Activated CD4-positive, alpha-beta memory T cell treated with anti-CD3 and anti-CD28 coated beads for 36 hours (primary cell): ENCODE measurements at regions of chr1 and their contacts with region 1.

Region 1: GRCh38 chr1:3796215-3797061 is at the start of gene LRRC47:
- DNase-seq: peak; percentile 96
- H3K4me3 Mint-ChIP-seq: peak within 1 kb of the TSS; percentile 94
- H3K27ac Mint-ChIP-seq: peak within 1 kb of the TSS; percentile 87
- H3K4me1 Mint-ChIP-seq: peaks cover 47% of the 10 kb centered on the region
- H3K27me3 Mint-ChIP-seq: peaks cover 7% of the 10 kb centered on the region
- total RNA-seq, gene LRRC47: 26.1 to 29.2 TPM

Region 2: GRCh38 chr1:2611621-2612344 is 1184.7 kb before region 1 on chr1:
- CTCF ChIA-PET with region 1: no interaction called
- POLR2A ChIA-PET with region 1: no interaction called
- intact Hi-C with region 1: no loop called
- DNase-seq: no peak
- H3K4me3 Mint-ChIP-seq: no peak overlapping the region
- H3K27ac Mint-ChIP-seq: no peak overlapping the region
- H3K4me1 Mint-ChIP-seq: peaks cover 2% of the 10 kb centered on the region
- H3K27me3 Mint-ChIP-seq: peaks cover 2% of the 10 kb centered on the region

Region 3: DNA sequence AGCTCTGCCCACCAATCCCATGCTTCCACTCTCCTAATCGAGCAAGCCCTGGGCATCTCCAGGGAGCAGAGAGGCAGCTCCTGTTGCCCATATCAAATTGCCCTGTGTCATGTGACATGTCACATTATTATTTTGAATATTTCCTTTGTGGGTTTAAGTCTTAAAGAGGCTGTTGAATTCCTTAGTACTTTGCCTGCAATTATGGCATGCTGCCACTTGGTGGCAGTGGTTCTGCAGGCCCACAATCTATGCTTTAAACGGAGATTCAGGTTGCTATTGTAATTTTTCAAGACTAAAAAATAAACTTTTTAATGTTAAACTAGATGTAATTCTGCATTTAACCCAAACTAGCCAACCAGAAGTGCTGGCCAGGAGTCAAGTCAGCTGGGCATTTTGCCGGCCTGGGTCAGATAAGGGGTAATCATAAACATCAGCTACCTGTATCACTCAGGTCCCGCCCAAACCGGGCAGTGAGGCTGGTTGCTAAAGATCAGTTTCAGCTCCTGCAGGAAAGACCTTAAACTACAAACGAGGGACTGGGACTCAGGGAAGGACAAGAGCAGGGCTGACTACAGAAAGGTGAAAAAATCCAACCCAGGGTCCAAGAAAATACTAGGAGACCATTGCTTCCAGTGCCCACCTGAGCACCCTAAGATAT is 379.2 kb before region 1 on chr1:
- CTCF ChIA-PET with region 1: no interaction called
- POLR2A ChIA-PET with region 1: no interaction called
- intact Hi-C with region 1: no loop called
- DNase-seq: no peak
- H3K4me3 Mint-ChIP-seq: no peak overlapping the region
- H3K27ac Mint-ChIP-seq: no peak overlapping the region
- H3K4me1 Mint-ChIP-seq: no peaks in the 10 kb centered on the region
- H3K27me3 Mint-ChIP-seq: peaks cover 3% of the 10 kb centered on the region

Region 4: GRCh38 chr1:3649342-3650247 is 146.8 kb before region 1 on chr1 and contains the start of gene WRAP73:
- CTCF ChIA-PET with region 1: no interaction called
- POLR2A ChIA-PET with region 1: no interaction called
- intact Hi-C with region 1: loop called (anchors 5 kb)
- DNase-seq: peak; percentile 95
- H3K4me3 Mint-ChIP-seq: peak within 1 kb of the TSS; percentile 76
- H3K27ac Mint-ChIP-seq: no peak within 1 kb of the TSS
- H3K4me1 Mint-ChIP-seq: peaks cover 23% of the 10 kb centered on the region
- H3K27me3 Mint-ChIP-seq: peaks cover 25% of the 10 kb centered on the region
- total RNA-seq, gene WRAP73: 34.5 to 34.6 TPM

Region 5: GRCh38 chr1:3695326-3696217 is 100.9 kb before region 1 on chr1:
- CTCF ChIA-PET with region 1: no interaction called
- POLR2A ChIA-PET with region 1: no interaction called
- intact Hi-C with region 1: no loop called
- DNase-seq: peak; percentile 49
- H3K4me3 Mint-ChIP-seq: peak overlapping the region; percentile 23
- H3K27ac Mint-ChIP-seq: no peak overlapping the region
- H3K4me1 Mint-ChIP-seq: peaks cover 4% of the 10 kb centered on the region
- H3K27me3 Mint-ChIP-seq: peaks cover 14% of the 10 kb centered on the region

Region 6: DNA sequence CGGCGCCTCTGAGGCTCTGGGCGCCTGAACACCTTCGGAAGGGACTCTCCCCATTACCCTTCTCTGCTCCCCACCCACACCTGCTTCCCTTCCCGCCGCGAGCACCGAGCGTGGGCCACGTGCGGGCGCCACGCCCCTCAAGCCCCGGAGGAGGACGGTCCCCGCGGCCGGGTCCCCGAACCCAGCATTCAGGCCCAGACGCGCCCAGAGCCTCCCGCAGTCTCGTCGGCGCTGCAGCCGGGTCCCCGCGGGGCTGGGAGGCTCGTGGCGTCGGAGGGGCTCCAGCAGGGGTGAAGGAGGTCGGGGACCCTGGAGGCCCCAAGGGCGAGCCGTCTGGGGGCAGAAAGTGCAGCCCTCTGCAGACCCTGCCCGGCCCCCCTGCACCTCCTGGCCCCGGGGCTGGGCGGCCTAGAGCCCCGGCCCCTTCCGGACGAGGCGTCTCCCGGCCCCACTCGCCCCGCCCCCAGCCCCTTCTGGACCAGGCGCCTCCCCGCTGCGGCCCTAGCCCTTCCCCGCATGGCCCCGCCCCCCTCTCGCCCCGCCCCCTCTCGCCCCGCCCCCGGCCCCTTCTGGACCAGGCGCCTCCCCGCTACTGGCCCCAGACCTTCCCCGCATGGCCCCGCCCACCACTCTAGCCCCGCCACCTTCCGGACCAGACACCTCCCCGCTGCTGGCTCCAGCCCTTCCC is 24.3 kb before region 1 on chr1:
- CTCF ChIA-PET with region 1: interaction called, 39 read pairs
- POLR2A ChIA-PET with region 1: interaction called, 3 read pairs
- intact Hi-C with region 1: loop called (anchors 1 kb)
- DNase-seq: peak; percentile 94
- H3K4me3 Mint-ChIP-seq: peak overlapping the region; percentile 57
- H3K27ac Mint-ChIP-seq: no peak overlapping the region
- H3K4me1 Mint-ChIP-seq: peaks cover 5% of the 10 kb centered on the region
- H3K27me3 Mint-ChIP-seq: peaks cover 4% of the 10 kb centered on the region

Region 7: GRCh38 chr1:3785456-3786157 is 10.8 kb before region 1 on chr1:
- CTCF ChIA-PET with region 1: interaction called, 7 read pairs
- POLR2A ChIA-PET with region 1: interaction called, 10 read pairs
- intact Hi-C with region 1: loop called (anchors 1 kb)
- DNase-seq: peak; percentile 34
- H3K4me3 Mint-ChIP-seq: no peak overlapping the region
- H3K27ac Mint-ChIP-seq: no peak overlapping the region
- H3K4me1 Mint-ChIP-seq: peaks cover 19% of the 10 kb centered on the region
- H3K27me3 Mint-ChIP-seq: no peaks in the 10 kb centered on the region

Region 8: DNA sequence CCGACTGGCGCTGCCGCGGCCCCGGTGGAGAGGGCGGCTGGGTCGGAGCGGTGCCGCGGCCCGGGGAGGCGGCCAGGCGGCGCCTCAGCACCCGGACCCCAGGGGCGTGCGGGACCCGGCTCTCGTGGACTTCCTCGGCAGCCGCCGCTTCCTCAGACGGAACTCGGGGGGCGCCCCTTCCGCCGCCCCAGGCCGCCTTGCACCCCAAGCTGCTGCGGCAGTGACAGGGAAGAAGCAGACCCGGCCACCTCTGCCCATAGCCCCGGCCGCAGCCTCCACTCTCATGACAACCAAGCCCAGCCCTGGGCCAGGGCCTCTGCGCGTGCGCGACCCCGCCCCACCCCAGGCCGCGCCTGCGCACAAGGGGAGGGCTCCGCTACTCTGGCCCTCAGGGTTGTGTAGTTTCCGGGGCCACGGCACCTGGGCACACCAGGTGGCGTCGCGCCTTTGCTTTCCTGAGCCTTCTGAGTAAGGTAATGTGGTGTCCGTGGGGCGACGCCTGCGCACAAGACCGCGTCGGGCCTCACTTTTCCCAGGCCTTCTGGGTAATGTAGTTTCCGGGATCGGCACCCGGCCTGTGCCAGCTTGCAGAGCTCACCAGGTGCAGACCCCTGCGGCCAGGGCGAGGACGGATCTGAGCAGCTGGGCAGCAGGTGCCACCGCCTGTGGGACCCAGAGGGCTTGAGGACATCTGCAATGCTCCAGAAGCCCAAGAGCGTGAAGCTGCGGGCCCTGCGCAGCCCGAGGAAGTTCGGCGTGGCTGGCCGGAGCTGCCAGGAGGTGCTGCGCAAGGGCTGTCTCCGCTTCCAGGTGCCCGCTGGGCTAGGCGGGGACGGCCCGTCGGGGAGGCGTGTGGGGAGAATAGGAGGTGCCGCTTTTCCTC is 60.7 kb after region 1 on chr1 and contains the starts of genes CEP104 and DFFB:
- CTCF ChIA-PET with region 1: interaction called, 4 read pairs
- POLR2A ChIA-PET with region 1: interaction called, 3 read pairs
- intact Hi-C with region 1: loop called (anchors 2 kb)
- DNase-seq: peak; percentile 98
- H3K4me3 Mint-ChIP-seq: peak within 1 kb of the TSS; percentile 89
- H3K27ac Mint-ChIP-seq: peak within 1 kb of the TSS; percentile 71
- H3K4me1 Mint-ChIP-seq: peaks cover 27% of the 10 kb centered on the region
- H3K27me3 Mint-ChIP-seq: no peaks in the 10 kb centered on the region
- total RNA-seq, gene CEP104: 29.0 to 32.8 TPM
- total RNA-seq, gene DFFB: 7.5 to 8.3 TPM